ENCODE measurements at regions of chr4 and their contacts with region 1.

Region 1: GRCh38 chr4:111854494-111855087 is 290.7 kb upstream of the FAM241A start:
- DNase-seq: peak; percentile 35

Region 2: GRCh38 chr4:111641955-111642579 is 212.5 kb before region 1 on chr4:
- CTCF ChIA-PET with region 1: interaction called, 13 read pairs
- POLR2A ChIA-PET with region 1: no interaction called
- DNase-seq: peak; percentile 69